A673 (cell line): ENCODE measurements at regions of chr18 and their contacts with region 1.

Region 1: GRCh38 chr18:12777500-12777944 is 74.7 kb downstream of the PSMG2 start:
- DNase-seq: peak; percentile 15
- H3K4me3 ChIP-seq: peak overlapping the region; percentile 31
- H3K27ac ChIP-seq: no peak overlapping the region
- H3K4me1 ChIP-seq: no peaks in the 10 kb centered on the region
- H3K27me3 ChIP-seq: no peaks in the 10 kb centered on the region
- CTCF ChIP-seq: no peak

Region 2: DNA sequence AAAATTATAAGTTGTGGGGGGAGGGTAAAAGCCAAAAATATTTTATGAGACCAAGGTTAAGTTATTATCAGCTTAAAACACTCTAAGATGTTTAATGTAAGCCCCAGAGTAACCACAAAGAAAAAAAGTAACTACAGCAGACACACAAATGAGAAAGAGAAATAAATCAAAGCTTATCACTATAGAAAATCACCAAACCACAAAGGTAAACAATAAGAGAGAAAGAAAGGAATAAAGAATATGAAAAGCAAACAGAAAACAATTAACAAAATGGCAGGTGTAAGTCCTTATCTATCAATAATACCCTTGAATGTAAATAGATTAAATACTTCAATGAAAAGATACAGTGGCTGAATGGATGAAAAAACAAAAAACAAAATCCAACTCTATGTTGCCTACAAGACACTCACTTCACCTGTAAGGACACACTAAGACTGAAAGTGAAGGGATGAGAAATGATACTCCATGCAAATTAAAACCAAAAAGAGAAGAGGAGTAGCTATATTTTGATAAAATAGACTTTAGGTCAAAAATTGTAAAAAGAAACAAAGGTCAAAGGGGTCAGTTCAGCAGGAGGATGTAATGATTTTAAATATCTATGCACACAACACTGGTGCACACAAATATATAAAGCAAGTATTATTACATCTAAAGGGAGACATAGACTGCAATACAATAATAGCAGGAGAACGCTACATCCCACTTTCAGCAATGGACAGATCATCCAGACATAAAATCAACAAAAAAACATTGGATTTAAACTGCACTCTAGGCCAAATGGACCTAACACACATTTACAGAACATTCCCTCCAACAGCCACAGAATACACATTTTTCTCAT is 25.8 kb after region 1 on chr18:
- CTCF ChIA-PET with region 1: no interaction called
- POLR2A ChIA-PET with region 1: no interaction called
- intact Hi-C with region 1: loop called (anchors 2 kb)
- DNase-seq: no peak
- H3K4me3 ChIP-seq: no peak overlapping the region
- H3K27ac ChIP-seq: no peak overlapping the region
- H3K4me1 ChIP-seq: no peaks in the 10 kb centered on the region
- H3K27me3 ChIP-seq: no peaks in the 10 kb centered on the region
- CTCF ChIP-seq: no peak

Region 3: GRCh38 chr18:13539050-13539449 is 761.5 kb after region 1 on chr18:
- CTCF ChIA-PET with region 1: no interaction called
- POLR2A ChIA-PET with region 1: no interaction called
- intact Hi-C with region 1: no loop called
- DNase-seq: peak; percentile 42
- H3K4me3 ChIP-seq: no peak overlapping the region
- H3K27ac ChIP-seq: no peak overlapping the region
- H3K4me1 ChIP-seq: peaks cover 32% of the 10 kb centered on the region
- H3K27me3 ChIP-seq: peaks cover 5% of the 10 kb centered on the region
- CTCF ChIP-seq: no peak